HepG2 (cell line): ENCODE measurements at regions of chr20 and their contacts with region 1.

Region 1: DNA sequence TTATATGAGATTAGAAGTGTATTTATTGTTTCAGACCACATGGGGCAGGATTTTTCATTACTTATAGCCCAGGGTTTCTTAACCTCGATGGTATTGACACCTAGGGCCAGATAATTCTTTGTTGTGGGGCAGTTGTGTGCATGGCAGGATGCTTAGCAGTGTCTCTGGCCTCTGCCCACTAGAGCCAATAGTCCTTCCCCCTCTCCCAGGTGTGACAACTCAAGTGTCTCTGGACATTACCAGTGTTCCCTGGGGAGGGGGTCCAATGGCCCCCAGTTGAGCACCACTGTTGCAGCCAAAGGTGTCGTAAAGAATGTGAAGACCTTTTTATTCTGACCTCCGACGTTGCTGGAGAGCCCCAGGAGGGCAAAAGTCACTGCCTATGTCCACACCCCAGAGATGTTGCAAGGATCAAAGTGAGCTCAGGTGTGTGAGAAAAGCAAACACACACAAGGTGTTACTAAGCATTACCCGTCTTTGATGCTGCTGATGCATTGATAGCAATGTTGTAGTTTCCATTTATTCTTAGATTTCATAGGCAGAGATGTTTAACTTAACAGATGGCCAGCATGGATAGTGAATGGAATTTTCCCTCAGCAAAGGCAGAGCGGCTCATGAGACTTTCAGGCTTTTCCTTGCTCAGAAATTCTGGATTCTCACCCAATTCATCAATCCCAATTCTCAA is 22.2 kb downstream of the BANF2 start:
- DNase-seq: peak; percentile 99
- ATAC-seq: peak; percentile 91
- H3K4me3 ChIP-seq: peak overlapping the region in 1 of 3 experiments; percentile 8; a peak in 2 of 6 replicates
- H3K27ac ChIP-seq: peak overlapping the region; percentile 55
- H3K4me1 ChIP-seq: peaks cover 44% of the 10 kb centered on the region
- H3K27me3 ChIP-seq: peaks cover 4 to 65% of the 10 kb centered on the region in 2 experiments; a peak in 4 of 5 replicates
- CTCF ChIP-seq: peak; percentile 35; the same call in 1 of the 2 replicates
- EP300 ChIP-seq: peak; percentile 99; a peak in 3 of 4 replicates
- POLR2A ChIP-seq: no peak
- RAD21 ChIP-seq: peak; percentile 59; the same call in 1 of the 2 replicates

Region 2: DNA sequence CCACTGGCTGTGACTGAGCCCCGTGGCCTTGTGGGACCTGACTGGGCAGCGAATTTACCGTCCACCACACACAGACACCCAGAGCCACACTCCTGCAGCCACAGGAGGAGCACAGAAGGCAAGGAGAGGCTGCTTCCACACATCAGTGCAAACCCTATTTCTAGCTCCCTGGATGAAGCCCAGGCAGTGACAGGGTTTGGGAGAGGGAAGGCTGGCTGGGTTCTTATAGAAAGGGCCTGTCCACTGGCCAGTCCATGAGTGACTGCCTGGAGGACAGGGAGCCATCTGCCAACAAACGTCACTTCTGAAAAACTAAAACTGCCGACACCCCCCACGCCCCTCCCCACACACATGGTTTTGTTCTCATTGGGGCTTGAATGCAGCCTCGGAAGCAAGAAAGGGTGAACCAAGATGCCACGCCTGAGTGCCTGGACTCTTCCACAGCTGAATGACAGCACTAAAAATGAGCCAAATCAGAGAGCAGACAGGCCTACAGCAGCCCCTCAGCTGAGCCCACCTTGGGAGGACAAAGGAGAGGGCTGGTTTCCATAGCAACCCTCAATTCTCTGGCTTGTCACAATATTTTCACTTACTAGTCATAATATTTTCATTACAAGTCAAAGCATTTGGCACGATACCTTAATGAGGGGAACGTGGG is 78.3 kb before region 1 on chr20:
- CTCF ChIA-PET with region 1: no interaction called
- POLR2A ChIA-PET with region 1: no interaction called
- in situ Hi-C with region 1: no loop called
- intact Hi-C with region 1: no loop called
- DNase-seq: no peak
- ATAC-seq: no peak
- H3K4me3 ChIP-seq: no peak overlapping the region
- H3K27ac ChIP-seq: no peak overlapping the region
- H3K4me1 ChIP-seq: peaks cover 32% of the 10 kb centered on the region
- H3K27me3 ChIP-seq: no peaks in the 10 kb centered on the region
- CTCF ChIP-seq: no peak
- EP300 ChIP-seq: no peak
- POLR2A ChIP-seq: no peak
- RAD21 ChIP-seq: no peak

Region 3: DNA sequence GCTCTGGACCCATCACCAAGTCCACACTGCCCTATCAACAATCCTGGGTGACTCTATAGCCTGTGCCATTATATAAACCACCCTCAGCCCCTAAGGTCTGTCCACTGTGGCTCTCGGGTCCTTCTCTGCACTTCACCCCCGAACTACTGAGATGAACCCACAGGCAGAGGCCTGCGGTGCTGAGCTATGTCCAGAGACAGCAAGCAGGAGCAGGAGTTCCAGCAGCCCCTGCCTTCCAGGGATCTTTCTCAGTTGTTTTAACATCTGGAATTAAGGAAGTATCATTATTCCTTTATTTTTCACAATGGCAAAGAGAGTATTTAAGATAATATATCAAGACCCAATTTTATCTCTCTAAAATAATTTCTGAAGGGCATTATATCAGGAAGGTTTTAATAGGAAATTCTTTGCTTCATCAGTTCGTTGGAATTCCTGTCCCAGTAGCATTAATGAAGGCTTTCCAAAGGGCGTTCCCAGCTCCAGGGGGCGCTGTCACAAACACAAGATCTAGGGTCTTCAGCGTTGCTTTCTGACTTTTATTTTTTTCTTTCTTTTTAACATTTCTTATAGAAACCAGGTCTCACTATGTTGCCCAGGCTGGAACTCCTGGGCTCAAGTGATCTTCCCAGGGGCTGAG is 67.2 kb before region 1 on chr20:
- CTCF ChIA-PET with region 1: no interaction called
- POLR2A ChIA-PET with region 1: no interaction called
- in situ Hi-C with region 1: no loop called
- intact Hi-C with region 1: no loop called
- DNase-seq: peak; percentile 53
- ATAC-seq: no peak
- H3K4me3 ChIP-seq: no peak overlapping the region
- H3K27ac ChIP-seq: no peak overlapping the region
- H3K4me1 ChIP-seq: no peaks in the 10 kb centered on the region
- H3K27me3 ChIP-seq: no peaks in the 10 kb centered on the region
- CTCF ChIP-seq: peak; percentile 63
- EP300 ChIP-seq: no peak
- POLR2A ChIP-seq: no peak
- RAD21 ChIP-seq: no peak; the same call in 1 of the 2 replicates

Region 4: GRCh38 chr20:17825960-17826843 is 104.3 kb after region 1 on chr20:
- CTCF ChIA-PET with region 1: no interaction called
- POLR2A ChIA-PET with region 1: interaction called, 3 read pairs
- in situ Hi-C with region 1: no loop called
- intact Hi-C with region 1: loop called (anchors 5 kb)
- DNase-seq: peak; percentile 44
- ATAC-seq: peak; percentile 10; the same call in 1 of the 3 replicates
- H3K4me3 ChIP-seq: no peak overlapping the region
- H3K27ac ChIP-seq: no peak overlapping the region
- H3K4me1 ChIP-seq: peaks cover 88% of the 10 kb centered on the region
- H3K27me3 ChIP-seq: no peaks in the 10 kb centered on the region; a peak in 1 of 5 replicates
- CTCF ChIP-seq: no peak
- EP300 ChIP-seq: no peak
- POLR2A ChIP-seq: no peak
- RAD21 ChIP-seq: no peak

Region 5: DNA sequence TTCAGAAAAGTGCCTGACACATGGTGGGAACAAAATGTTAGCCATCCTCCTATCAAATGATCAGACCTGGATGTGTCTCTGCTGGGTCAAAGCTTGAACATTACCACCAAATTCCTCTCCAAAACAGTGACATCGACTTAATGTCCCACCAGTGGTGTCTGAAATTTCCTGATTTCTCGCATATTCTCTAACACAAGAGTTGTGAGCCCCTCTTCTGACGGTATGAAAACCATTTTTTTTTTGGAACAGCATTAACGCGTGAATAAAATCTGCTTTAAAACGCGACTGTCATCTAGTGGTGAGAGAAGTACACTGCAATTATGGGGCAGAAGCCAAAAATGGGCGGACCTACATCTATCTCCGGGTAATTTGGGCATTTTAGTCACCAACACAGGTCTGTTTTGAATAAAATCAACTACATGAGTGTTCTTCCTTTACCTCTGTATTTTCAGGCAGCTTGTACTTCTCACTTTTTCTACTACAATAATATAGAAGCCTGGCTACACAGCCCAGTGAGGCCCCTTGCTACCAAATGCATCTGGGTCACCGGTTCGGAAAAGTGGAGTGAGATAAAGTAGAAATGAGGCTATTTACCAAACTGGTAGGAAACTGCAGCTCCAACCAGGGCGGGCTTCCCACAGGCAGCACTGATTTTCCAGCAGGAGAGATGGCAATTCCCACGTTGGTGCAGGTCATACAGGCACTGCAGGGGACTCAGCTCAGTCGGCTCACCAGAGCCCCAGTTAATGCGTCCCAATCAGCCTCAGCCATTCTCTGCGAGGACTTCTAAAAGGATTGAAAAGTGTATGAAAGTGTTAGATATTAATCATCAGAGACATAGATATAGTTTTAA is 274.2 kb after region 1 on chr20:
- CTCF ChIA-PET with region 1: no interaction called
- POLR2A ChIA-PET with region 1: no interaction called
- in situ Hi-C with region 1: no loop called
- intact Hi-C with region 1: no loop called
- DNase-seq: peak; percentile 70
- ATAC-seq: peak; percentile 72
- H3K4me3 ChIP-seq: peak overlapping the region in 2 of 3 experiments; percentile 7 to 30; a peak in 2 of 6 replicates
- H3K27ac ChIP-seq: no peak overlapping the region
- H3K4me1 ChIP-seq: peaks cover 28% of the 10 kb centered on the region
- H3K27me3 ChIP-seq: peaks cover 2 to 23% of the 10 kb centered on the region in 2 experiments; a peak in 1 of 5 replicates
- CTCF ChIP-seq: peak; percentile 96
- EP300 ChIP-seq: no peak
- POLR2A ChIP-seq: no peak
- RAD21 ChIP-seq: peak; percentile 91